Right lobe of liver (tissue), 6 donors: ENCODE measurements at regions of chr12 and their contacts with region 1.

Region 1: DNA sequence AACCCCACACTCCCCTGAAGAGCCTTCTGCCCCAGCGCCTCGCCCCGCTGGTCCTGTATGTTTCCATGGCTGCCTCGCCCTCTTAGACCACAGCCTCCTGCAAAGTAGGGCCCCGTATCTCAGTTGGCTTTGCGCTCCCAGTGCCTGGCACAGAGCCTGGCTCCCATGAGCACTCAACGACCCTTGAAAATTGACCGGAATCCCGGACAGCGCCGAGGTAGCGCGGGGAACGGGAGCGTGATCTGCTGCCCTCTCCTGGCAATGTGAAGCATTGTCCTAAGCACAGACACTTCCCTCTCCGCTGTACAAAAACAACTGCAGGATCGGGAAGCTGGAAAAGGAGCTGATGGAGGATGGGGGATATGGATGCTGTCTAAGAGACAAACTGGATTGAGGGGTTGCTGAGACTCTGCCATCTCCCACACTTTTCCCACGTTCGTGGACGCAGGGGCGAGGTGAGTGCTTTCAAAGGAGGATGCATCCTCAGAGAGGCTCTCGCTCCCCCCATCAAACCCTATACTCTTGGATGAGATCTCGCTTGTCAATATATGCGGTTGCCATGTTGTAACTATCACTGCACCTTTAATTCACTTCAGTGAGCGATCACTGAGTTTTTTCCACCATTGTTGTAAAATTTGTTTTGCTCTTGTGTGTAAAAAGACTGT is 10.7 kb upstream of the FKBP4 start:
- DNase-seq: peak; percentile 56 to 70 (median 68)
- ATAC-seq: peak; percentile 98 to 99 (median 98)
- H3K4me3 ChIP-seq: no peak overlapping the region
- H3K27ac ChIP-seq: no peak overlapping the region
- H3K4me1 ChIP-seq: peaks cover 0 to 4% (median 0%) of the 10 kb centered on the region in 4 donors
- H3K27me3 ChIP-seq: no peaks in the 10 kb centered on the region
- CTCF ChIP-seq: peak; percentile 83 to 95 (median 88)
- POLR2A ChIP-seq: no peak

Region 2: GRCh38 chr12:2739817-2740641 is 44.0 kb before region 1 on chr12:
- intact Hi-C with region 1: loop called in 1 of 2 experiments (anchors 5 kb)
- DNase-seq: no peak
- ATAC-seq: peak; percentile 61 to 77 (median 70)
- H3K4me3 ChIP-seq: no peak overlapping the region
- H3K27ac ChIP-seq: no peak overlapping the region
- H3K4me1 ChIP-seq: no peaks in the 10 kb centered on the region
- H3K27me3 ChIP-seq: no peaks in the 10 kb centered on the region
- CTCF ChIP-seq: peak; percentile 58 to 78 (median 68)
- POLR2A ChIP-seq: no peak

Region 3: GRCh38 chr12:2820432-2820831 is 36.4 kb after region 1 on chr12:
- intact Hi-C with region 1: no loop called
- DNase-seq: no peak
- ATAC-seq: no peak
- H3K4me3 ChIP-seq: no peak overlapping the region
- H3K27ac ChIP-seq: no peak overlapping the region
- H3K4me1 ChIP-seq: no peaks in the 10 kb centered on the region
- H3K27me3 ChIP-seq: no peaks in the 10 kb centered on the region
- CTCF ChIP-seq: no peak
- POLR2A ChIP-seq: no peak